CD4-positive, alpha-beta memory T cell (primary cell): ENCODE measurements at regions of chr1 and their contacts with region 1.

Region 1: DNA sequence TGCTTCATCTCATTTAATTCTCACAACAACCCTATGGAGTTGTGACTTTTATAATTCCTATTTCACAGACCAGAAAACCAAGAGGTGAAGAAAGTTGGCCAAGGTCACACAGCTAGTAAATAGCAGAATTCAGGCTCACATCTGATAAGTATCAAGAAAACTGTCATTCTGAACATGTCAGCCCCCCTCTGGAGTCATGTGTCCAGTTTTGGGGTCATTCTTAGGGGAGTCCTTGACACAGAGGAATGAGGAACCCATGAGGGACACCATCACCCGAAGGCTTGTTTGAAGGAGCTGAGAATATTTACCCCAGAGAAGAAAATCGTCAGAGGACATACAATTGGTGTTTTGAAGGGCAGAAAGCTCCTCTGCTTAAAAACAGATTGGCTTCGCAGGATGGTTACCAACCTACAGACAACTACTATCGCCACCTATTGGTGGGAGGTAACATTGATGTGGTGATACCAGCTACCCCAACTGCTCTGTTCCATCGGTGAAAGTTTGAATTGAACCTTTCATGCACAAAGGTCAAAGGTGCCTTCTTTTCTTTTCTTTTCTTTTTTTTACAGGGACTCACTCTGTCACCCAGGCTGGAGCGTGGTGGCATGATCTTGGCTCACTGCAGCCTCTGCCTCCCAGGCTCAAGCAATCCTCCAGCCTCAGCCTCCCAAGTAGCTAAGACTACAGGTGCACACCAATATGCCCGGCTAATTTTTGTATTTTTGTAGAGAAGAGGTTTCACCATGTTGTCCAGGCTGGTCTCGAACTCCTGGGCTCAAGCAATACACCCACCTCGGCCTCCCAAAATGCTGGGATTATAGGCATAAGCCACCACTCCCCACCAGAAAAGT is 31.3 kb downstream of the NCMAP start:
- DNase-seq: peak; percentile 69 to 78 (median 74)
- H3K4me3 ChIP-seq: no peak overlapping the region
- H3K4me3 Mint-ChIP-seq: peak overlapping the region in 1 of 8 donors; percentile 46
- H3K27ac ChIP-seq: no peak overlapping the region
- H3K27ac Mint-ChIP-seq: peak overlapping the region in 6 of 7 donors; percentile 53 to 89 (median 80)
- H3K4me1 ChIP-seq: peaks cover 5% of the 10 kb centered on the region
- H3K4me1 Mint-ChIP-seq: peaks cover 0 to 9% (median 6%) of the 10 kb centered on the region in 4 donors
- H3K27me3 ChIP-seq: no peaks in the 10 kb centered on the region
- H3K27me3 Mint-ChIP-seq: peaks cover 0 to 1% of the 10 kb centered on the region in 2 donors

Region 2: GRCh38 chr1:24308365-24309015 is 278.7 kb before region 1 on chr1:
- CTCF ChIA-PET with region 1: no interaction called
- POLR2A ChIA-PET with region 1: no interaction called
- intact Hi-C with region 1: no loop called
- DNase-seq: no peak
- H3K4me3 ChIP-seq: no peak overlapping the region
- H3K4me3 Mint-ChIP-seq: no peak overlapping the region
- H3K27ac ChIP-seq: no peak overlapping the region
- H3K27ac Mint-ChIP-seq: no peak overlapping the region
- H3K4me1 ChIP-seq: no peaks in the 10 kb centered on the region
- H3K4me1 Mint-ChIP-seq: no peaks in the 10 kb centered on the region
- H3K27me3 ChIP-seq: no peaks in the 10 kb centered on the region
- H3K27me3 Mint-ChIP-seq: peaks cover 1 to 5% of the 10 kb centered on the region in 2 donors

Region 3: GRCh38 chr1:24385160-24385940 is 201.8 kb before region 1 on chr1:
- CTCF ChIA-PET with region 1: interaction called, 91 read pairs
- POLR2A ChIA-PET with region 1: no interaction called
- intact Hi-C with region 1: no loop called
- DNase-seq: peak in 3 of 5 donors; percentile 14 to 36 (median 19)
- H3K4me3 ChIP-seq: no peak overlapping the region
- H3K4me3 Mint-ChIP-seq: peak overlapping the region in 1 of 8 donors; percentile 10
- H3K27ac ChIP-seq: no peak overlapping the region
- H3K27ac Mint-ChIP-seq: peak overlapping the region in 6 of 7 donors; percentile 3 to 85 (median 47)
- H3K4me1 ChIP-seq: peaks cover 19% of the 10 kb centered on the region
- H3K4me1 Mint-ChIP-seq: peaks cover 13 to 23% (median 16%) of the 10 kb centered on the region in 4 donors
- H3K27me3 ChIP-seq: no peaks in the 10 kb centered on the region
- H3K27me3 Mint-ChIP-seq: no peaks in the 10 kb centered on the region

Region 4: GRCh38 chr1:24415334-24415909 is 171.8 kb before region 1 on chr1 and contains the start of gene NIPAL3:
- CTCF ChIA-PET with region 1: interaction called, 129 read pairs
- POLR2A ChIA-PET with region 1: interaction called, 34 read pairs
- intact Hi-C with region 1: loop called (anchors 1 kb)
- DNase-seq: peak; percentile 95 to 99 (median 98)
- H3K4me3 ChIP-seq: peak within 1 kb of the TSS; percentile 80 to 94
- H3K4me3 Mint-ChIP-seq: peak within 1 kb of the TSS; percentile 95 to 100 (median 98)
- H3K27ac ChIP-seq: peak within 1 kb of the TSS; percentile 67
- H3K27ac Mint-ChIP-seq: peak within 1 kb of the TSS; percentile 87 to 97 (median 95)
- H3K4me1 ChIP-seq: peaks cover 54% of the 10 kb centered on the region
- H3K4me1 Mint-ChIP-seq: peaks cover 37 to 76% (median 54%) of the 10 kb centered on the region in 4 donors
- H3K27me3 ChIP-seq: no peaks in the 10 kb centered on the region
- H3K27me3 Mint-ChIP-seq: no peaks in the 10 kb centered on the region
- total RNA-seq, gene NIPAL3: 52.8 to 53.2 TPM

Region 5: DNA sequence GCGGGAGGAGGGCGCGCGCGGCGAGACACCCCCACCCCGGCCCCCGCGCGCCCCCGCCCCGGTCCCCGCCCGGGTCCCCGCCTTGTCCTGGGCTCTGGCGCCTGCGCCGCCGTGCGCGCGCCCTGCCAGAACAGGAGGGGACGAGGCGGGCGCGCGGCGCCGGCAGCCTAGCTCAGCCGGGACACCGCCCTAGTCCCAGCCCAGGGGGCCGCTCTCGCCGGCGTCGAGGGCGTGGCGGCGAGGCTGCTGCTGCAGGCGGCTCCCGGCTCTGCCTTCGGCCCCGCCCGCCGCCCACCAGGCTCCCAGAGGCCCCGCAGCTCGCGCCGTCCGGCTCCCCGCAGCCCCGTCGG is 84.5 kb before region 1 on chr1 and contains the start of gene RCAN3:
- CTCF ChIA-PET with region 1: interaction called, 7 read pairs
- POLR2A ChIA-PET with region 1: interaction called, 7 read pairs
- intact Hi-C with region 1: loop called (anchors 2 kb)
- DNase-seq: peak; percentile 89 to 93 (median 90)
- H3K4me3 ChIP-seq: peak within 1 kb of the TSS; percentile 83 to 84
- H3K4me3 Mint-ChIP-seq: peak within 1 kb of the TSS; percentile 96 to 100 (median 99)
- H3K27ac ChIP-seq: peak within 1 kb of the TSS; percentile 93
- H3K27ac Mint-ChIP-seq: peak within 1 kb of the TSS; percentile 92 to 99 (median 98)
- H3K4me1 ChIP-seq: peaks cover 67% of the 10 kb centered on the region
- H3K4me1 Mint-ChIP-seq: peaks cover 43 to 83% (median 57%) of the 10 kb centered on the region in 4 donors
- H3K27me3 ChIP-seq: no peaks in the 10 kb centered on the region
- H3K27me3 Mint-ChIP-seq: no peaks in the 10 kb centered on the region
- total RNA-seq, gene RCAN3: 171 to 178 TPM

Region 6: GRCh38 chr1:24541711-24542346 is 45.4 kb before region 1 on chr1:
- CTCF ChIA-PET with region 1: interaction called, 23 read pairs
- POLR2A ChIA-PET with region 1: interaction called, 4 read pairs
- intact Hi-C with region 1: loop called (anchors 1 kb)
- DNase-seq: no peak
- H3K4me3 ChIP-seq: no peak overlapping the region
- H3K4me3 Mint-ChIP-seq: peak overlapping the region in 1 of 8 donors; percentile 29
- H3K27ac ChIP-seq: no peak overlapping the region
- H3K27ac Mint-ChIP-seq: peak overlapping the region; percentile 53 to 83 (median 71)
- H3K4me1 ChIP-seq: peaks cover 62% of the 10 kb centered on the region
- H3K4me1 Mint-ChIP-seq: peaks cover 46 to 71% (median 57%) of the 10 kb centered on the region in 4 donors
- H3K27me3 ChIP-seq: no peaks in the 10 kb centered on the region
- H3K27me3 Mint-ChIP-seq: no peaks in the 10 kb centered on the region

Region 7: DNA sequence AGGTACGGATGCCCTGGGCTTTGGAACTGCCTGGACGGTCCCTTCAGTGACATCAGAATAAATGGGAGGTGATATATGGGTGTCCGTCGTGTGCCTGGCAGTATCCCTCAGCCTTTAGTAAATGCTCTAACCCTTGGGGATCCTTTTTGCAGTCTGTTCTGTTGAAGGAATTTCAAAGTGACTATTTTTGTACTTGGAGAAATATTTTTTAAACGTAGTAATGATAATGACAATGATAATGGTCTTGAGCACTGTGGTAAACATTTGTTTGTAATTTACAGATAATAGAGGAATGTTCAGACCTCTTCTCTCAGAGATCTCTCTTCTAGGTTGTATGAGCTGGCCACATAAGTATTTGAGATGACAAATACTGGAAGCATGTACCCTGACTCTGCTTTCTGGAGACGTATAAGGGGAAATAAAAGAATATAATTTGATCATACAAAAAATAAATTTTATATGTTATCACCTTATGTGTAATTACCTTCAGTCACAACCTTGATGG is 13.9 kb after region 1 on chr1:
- CTCF ChIA-PET with region 1: interaction called, 12 read pairs
- POLR2A ChIA-PET with region 1: no interaction called
- intact Hi-C with region 1: no loop called
- DNase-seq: no peak
- H3K4me3 ChIP-seq: no peak overlapping the region
- H3K4me3 Mint-ChIP-seq: no peak overlapping the region
- H3K27ac ChIP-seq: no peak overlapping the region
- H3K27ac Mint-ChIP-seq: no peak overlapping the region
- H3K4me1 ChIP-seq: no peaks in the 10 kb centered on the region
- H3K4me1 Mint-ChIP-seq: peaks cover 0 to 1% (median 0%) of the 10 kb centered on the region in 4 donors
- H3K27me3 ChIP-seq: no peaks in the 10 kb centered on the region
- H3K27me3 Mint-ChIP-seq: peaks cover 0 to 3% of the 10 kb centered on the region in 2 donors

Region 8: DNA sequence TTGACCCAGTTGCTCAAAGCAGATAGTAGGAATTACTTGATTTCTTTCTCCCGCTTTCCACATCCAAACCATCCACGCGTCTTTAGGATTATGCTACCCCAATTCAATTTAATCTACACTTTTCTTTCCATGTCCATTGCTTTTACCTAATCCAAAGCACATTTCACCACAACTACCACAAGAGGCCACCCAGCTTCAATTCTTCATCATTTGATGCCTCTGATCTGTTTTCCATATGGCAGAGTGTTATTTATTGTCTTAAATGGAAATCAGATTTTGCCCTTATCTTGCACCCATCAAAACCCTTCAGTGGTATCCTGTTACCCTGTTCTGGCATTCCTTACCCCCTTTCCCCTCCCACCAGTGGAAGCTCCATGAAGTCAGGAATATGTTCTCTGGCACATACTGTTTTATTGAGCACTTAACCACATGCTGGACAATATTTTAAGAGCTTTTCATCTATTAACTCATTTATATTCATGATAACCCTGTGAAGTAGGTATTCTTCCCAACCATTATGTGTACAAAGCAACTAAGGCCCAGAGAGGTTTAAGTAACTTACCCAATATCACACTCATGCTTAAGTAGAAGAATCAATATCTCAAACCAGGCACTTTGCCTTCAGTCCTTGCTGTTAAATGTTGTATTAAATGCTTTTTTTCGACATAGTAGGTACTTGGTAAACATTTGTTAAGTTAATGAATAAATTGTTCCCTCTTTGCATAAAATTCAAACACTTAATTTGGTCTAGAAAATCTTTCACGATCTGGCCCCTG is 192.7 kb after region 1 on chr1:
- CTCF ChIA-PET with region 1: no interaction called
- POLR2A ChIA-PET with region 1: no interaction called
- intact Hi-C with region 1: no loop called
- DNase-seq: no peak
- H3K4me3 ChIP-seq: no peak overlapping the region
- H3K4me3 Mint-ChIP-seq: no peak overlapping the region
- H3K27ac ChIP-seq: no peak overlapping the region
- H3K27ac Mint-ChIP-seq: no peak overlapping the region
- H3K4me1 ChIP-seq: no peaks in the 10 kb centered on the region
- H3K4me1 Mint-ChIP-seq: no peaks in the 10 kb centered on the region
- H3K27me3 ChIP-seq: no peaks in the 10 kb centered on the region
- H3K27me3 Mint-ChIP-seq: peaks cover 3 to 7% of the 10 kb centered on the region in 2 donors